Sigmoid colon (tissue), 7 donors: ENCODE measurements at regions of chr19 and their contacts with region 1.

Region 1: GRCh38 chr19:37217855-37218591 is at the start of gene ZNF383:
- DNase-seq: peak; percentile 88
- H3K4me3 ChIP-seq: peak within 1 kb of the TSS; percentile 71 to 91 (median 82)
- H3K27ac ChIP-seq: peak within 1 kb of the TSS; percentile 86 to 95 (median 93)
- H3K4me1 ChIP-seq: peaks cover 0 to 16% (median 11%) of the 10 kb centered on the region in 4 donors
- H3K27me3 ChIP-seq: no peaks in the 10 kb centered on the region
- CTCF ChIP-seq: no peak
- EP300 ChIP-seq: no peak
- POLR2A ChIP-seq: peak; percentile 12 to 37
- total RNA-seq, gene ZNF383: 10.9 to 19.7 (median 13.0) TPM

Region 2: DNA sequence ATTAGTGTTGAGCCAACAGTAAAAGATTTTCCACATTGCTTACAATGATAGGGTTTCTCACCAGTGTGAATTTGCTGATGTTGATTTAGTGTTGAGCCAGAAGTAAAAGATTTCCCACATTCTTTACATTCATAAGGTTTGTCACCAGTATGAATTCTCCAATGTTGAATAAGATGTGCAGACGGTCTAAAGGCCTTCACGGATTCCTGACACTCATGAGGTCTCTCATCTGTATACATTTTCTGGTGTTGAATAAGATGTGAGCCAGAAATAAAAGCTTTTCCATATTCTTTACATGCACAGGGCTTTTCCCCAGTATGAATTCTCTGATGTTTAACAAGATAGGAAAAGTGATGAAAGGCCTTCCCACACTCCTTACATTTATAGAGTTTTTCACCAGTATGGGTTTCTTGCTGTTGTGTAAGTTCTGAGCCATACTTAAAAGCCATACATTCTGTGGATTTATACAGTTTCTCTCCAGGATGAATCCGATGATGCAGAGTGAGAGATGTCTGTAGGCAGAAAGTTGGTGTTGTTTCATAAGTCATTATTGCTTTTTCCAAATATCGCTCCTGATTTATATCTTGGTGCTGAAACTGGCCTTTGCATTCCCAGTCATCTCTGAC is 467.8 kb before region 1 on chr19:
- intact Hi-C with region 1: no loop called
- DNase-seq: no peak
- H3K4me3 ChIP-seq: no peak overlapping the region
- H3K27ac ChIP-seq: no peak overlapping the region
- H3K4me1 ChIP-seq: no peaks in the 10 kb centered on the region
- H3K27me3 ChIP-seq: no peaks in the 10 kb centered on the region
- CTCF ChIP-seq: no peak
- EP300 ChIP-seq: no peak
- POLR2A ChIP-seq: no peak

Region 3: GRCh38 chr19:37059142-37059541 is 158.9 kb before region 1 on chr19:
- intact Hi-C with region 1: no loop called
- DNase-seq: no peak
- H3K4me3 ChIP-seq: no peak overlapping the region
- H3K27ac ChIP-seq: no peak overlapping the region
- H3K4me1 ChIP-seq: no peaks in the 10 kb centered on the region
- H3K27me3 ChIP-seq: no peaks in the 10 kb centered on the region
- CTCF ChIP-seq: no peak
- EP300 ChIP-seq: no peak
- POLR2A ChIP-seq: no peak

Region 4: DNA sequence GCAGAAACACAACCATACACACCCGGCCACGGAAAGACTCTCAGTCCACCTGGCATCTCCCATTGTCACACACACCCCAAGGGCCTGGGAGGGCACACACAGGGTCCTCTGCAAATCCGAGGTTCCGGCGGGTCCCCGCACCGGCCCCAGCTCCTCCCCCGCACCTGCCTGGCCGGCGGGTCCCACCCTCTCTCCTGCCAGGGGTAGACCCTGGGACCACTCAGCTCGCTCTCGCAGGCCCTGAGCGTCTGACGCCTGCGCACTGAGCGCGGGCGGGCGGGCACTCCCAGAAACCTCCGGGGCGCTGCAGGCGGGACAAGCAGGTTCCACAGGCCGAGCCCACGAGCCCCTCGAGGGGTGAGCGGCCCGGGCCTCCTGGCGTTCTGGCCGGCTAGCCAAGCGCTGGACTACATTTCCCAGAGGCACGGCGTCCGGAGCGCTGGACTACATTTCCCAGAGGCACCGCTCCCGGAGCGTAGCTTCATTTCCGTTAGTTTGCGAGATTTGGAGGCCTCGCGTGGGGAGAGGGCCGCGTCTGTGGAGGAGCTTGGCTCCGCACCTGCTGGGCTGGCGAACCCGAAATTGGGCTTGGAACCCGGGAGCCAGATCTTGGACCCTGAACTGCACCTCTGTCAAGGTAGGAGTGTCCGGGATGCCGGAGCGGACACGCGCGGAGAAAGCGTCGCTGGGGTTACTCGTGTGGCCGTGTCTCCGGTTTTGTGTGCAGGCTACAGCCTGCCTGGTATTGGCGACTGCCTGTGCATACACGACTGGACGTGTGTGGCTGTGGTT is 139.9 kb before region 1 on chr19 and contains the start of gene ZNF420:
- intact Hi-C with region 1: loop called (anchors 5 kb)
- DNase-seq: peak; percentile 97
- H3K4me3 ChIP-seq: peak within 1 kb of the TSS; percentile 58 to 82 (median 74)
- H3K27ac ChIP-seq: peak within 1 kb of the TSS; percentile 86 to 91 (median 88)
- H3K4me1 ChIP-seq: peaks cover 0 to 20% (median 14%) of the 10 kb centered on the region in 4 donors
- H3K27me3 ChIP-seq: no peaks in the 10 kb centered on the region
- CTCF ChIP-seq: no peak
- EP300 ChIP-seq: peak in 1 of 4 donors; percentile 4
- POLR2A ChIP-seq: peak in 1 of 2 donors; percentile 53
- total RNA-seq, gene ZNF420: 8.4 to 18.6 (median 14.1) TPM

Region 5: DNA sequence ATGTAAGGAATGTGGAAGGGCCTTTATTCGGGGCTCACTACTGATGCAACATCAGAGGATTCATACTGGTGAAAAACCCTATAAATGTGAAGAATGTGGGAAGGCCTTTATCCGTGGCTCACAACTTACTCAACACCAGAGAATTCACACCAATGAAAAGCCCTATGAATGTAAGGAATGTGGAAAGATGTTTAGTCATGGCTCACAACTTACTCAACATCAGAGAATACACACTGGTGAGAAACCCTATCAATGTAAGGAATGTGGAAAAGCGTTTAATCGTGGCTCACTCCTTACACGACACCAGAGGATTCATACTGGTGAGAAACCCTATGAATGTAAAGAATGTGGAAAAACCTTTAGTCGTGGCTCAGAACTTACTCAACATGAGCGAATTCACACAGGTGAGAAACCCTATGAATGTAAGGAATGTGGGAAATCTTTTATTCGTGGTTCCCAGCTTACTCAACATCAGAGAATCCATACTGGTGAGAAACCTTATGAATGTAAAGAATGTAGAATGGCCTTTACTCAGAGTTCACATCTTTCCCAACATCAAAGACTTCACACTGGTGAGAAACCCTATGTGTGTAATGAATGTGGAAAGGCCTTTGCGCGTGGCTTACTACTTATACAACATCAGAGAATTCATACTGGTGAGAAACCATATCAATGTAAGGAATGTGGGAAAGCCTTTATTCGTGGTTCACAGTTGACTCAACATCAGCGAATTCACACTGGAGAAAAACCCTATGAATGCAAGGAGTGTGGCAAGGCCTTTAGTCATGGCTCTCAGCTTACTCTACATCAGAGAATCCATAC is 89.8 kb before region 1 on chr19:
- intact Hi-C with region 1: no loop called
- DNase-seq: no peak
- H3K4me3 ChIP-seq: no peak overlapping the region
- H3K27ac ChIP-seq: no peak overlapping the region
- H3K4me1 ChIP-seq: no peaks in the 10 kb centered on the region
- H3K27me3 ChIP-seq: no peaks in the 10 kb centered on the region
- CTCF ChIP-seq: no peak
- EP300 ChIP-seq: no peak
- POLR2A ChIP-seq: no peak

Region 6: GRCh38 chr19:37172368-37173366 is 45.4 kb before region 1 on chr19 and contains the start of gene ZNF585A:
- intact Hi-C with region 1: loop called (anchors 5 kb)
- DNase-seq: peak; percentile 95
- H3K4me3 ChIP-seq: peak within 1 kb of the TSS; percentile 53 to 64 (median 60)
- H3K27ac ChIP-seq: peak within 1 kb of the TSS; percentile 70 to 78 (median 76)
- H3K4me1 ChIP-seq: peaks cover 0 to 8% (median 0%) of the 10 kb centered on the region in 4 donors
- H3K27me3 ChIP-seq: no peaks in the 10 kb centered on the region
- CTCF ChIP-seq: peak in 1 of 4 experiments; percentile 18
- EP300 ChIP-seq: no peak
- POLR2A ChIP-seq: no peak
- total RNA-seq, gene ZNF585A: 3.9 to 13.7 (median 7.1) TPM

Region 7: DNA sequence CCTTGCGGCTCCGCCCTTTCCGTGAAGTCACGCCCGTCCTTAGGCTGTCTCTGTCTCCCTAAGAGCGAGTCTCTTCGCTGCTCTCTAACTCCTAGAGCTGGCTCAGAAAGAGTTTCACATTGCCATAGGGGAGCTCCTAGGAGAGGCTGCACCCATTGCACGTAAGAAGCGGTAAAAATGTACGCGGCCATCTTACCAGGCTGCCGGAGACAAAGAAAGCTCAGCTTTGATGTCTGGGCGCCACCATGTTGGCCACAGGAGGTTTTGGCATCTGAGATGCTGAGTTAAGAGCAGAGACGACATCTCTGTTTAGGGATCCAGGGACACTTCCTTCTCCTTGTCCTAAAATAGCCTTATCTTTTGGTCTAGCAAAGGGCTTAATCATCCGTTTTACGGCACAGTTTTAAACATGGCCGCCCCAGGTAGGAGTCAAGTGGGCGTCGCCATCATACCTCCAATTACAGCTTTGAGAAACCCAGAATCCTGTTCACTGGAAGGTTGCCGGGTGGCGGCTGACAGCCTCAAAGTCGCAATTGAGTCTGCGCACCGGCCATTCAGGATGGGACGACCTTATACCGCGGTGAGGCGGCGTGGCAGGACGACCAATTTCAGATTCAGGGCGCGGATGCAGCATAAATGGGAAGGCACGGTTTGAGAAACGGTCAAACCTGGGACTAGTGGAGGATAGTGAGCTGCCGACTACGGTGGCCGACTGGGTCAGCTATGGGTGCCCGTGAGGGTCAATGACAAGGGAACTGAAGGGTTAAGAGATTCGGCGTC is 288.6 kb after region 1 on chr19 and contains the start of gene ZNF793:
- intact Hi-C with region 1: loop called (anchors 10 kb)
- DNase-seq: peak; percentile 90
- H3K4me3 ChIP-seq: peak within 1 kb of the TSS; percentile 61 to 71 (median 67)
- H3K27ac ChIP-seq: peak within 1 kb of the TSS; percentile 88 to 95 (median 92)
- H3K4me1 ChIP-seq: peaks cover 0 to 15% (median 9%) of the 10 kb centered on the region in 4 donors
- H3K27me3 ChIP-seq: no peaks in the 10 kb centered on the region
- CTCF ChIP-seq: no peak
- EP300 ChIP-seq: no peak
- POLR2A ChIP-seq: peak in 1 of 2 donors; percentile 47
- total RNA-seq, gene ZNF793: 2.9 to 6.1 (median 5.4) TPM